ENCODE measurements at regions of chr1 and their contacts with region 1.

Region 1: GRCh38 chr1:42456010-42456758 is at the starts of genes PPCS and ZMYND12:
- DNase-seq: peak; percentile 95
- H3K4me3 ChIP-seq: peak within 1 kb of the TSS; percentile 73 to 95 (median 88)
- H3K27ac ChIP-seq: peak within 1 kb of the TSS; percentile 86 to 93 (median 90)
- H3K4me1 ChIP-seq: peaks cover 14 to 25% (median 24%) of the 10 kb centered on the region in 4 donors
- H3K27me3 ChIP-seq: no peaks in the 10 kb centered on the region
- CTCF ChIP-seq: peak in 1 of 3 experiments; percentile 21
- EP300 ChIP-seq: no peak
- POLR2A ChIP-seq: peak; percentile 46
- total RNA-seq, gene PPCS: 59.1 to 105 (median 90.6) TPM
- total RNA-seq, gene ZMYND12: 0.23 to 1.7 (median 0.78) TPM in 3 of 4 donors, not detected in the other

Region 2: GRCh38 chr1:42173155-42173933 is 282.8 kb before region 1 on chr1:
- intact Hi-C with region 1: loop called (anchors 10 kb)
- DNase-seq: no peak
- H3K4me3 ChIP-seq: no peak overlapping the region
- H3K27ac ChIP-seq: no peak overlapping the region
- H3K4me1 ChIP-seq: peaks cover 18 to 31% (median 19%) of the 10 kb centered on the region in 4 donors
- H3K27me3 ChIP-seq: peaks cover 0 to 14% (median 0%) of the 10 kb centered on the region in 4 donors
- CTCF ChIP-seq: peak; percentile 89 to 99 (median 92)
- EP300 ChIP-seq: no peak
- POLR2A ChIP-seq: no peak

Region 3: DNA sequence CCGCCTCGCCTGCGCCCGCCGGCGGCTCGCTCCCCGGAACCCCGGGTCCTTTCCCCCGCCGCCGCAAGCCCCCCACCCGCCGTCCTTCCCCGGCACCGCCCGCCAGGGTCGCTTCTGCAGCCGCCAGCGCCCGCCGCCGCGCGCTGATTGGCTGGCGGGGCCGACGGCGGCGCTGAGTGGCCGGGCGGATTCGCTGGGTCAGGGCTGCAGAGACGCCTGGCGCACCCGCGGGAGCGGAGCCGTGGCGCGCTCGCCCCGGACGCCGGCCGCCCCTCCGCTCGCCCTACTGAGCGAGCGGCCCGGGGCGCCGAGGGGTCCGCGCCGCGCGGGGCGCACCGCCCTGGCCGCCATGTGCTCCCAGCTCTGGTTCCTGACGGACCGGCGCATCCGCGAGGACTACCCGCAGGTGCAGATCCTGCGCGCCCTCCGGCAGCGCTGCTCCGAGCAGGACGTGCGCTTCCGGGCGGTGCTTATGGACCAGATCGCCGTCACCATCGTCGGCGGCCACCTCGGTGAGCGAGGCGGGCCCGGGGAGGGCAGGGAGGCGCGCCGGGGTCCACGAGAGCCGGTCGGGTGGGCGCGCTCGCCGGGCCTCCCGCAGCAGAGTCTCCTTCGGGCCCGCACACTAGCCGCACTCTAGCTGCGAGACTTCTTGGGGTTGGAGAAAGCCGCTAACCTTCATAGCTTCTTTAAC is 75.5 kb before region 1 on chr1 and contains the start of gene RIMKLA:
- intact Hi-C with region 1: loop called (anchors 5 kb)
- DNase-seq: no peak
- H3K4me3 ChIP-seq: peak within 1 kb of the TSS; percentile 69 to 86 (median 74)
- H3K27ac ChIP-seq: peak within 1 kb of the TSS; percentile 56 to 78 (median 74)
- H3K4me1 ChIP-seq: peaks cover 12 to 28% (median 23%) of the 10 kb centered on the region in 4 donors
- H3K27me3 ChIP-seq: no peaks in the 10 kb centered on the region
- CTCF ChIP-seq: peak in 1 of 3 experiments; percentile 5
- EP300 ChIP-seq: no peak
- POLR2A ChIP-seq: no peak
- total RNA-seq, gene RIMKLA: 1.8 to 5.3 (median 3.4) TPM